Head of caudate nucleus (tissue), 42 donors: ENCODE measurements at regions of chr7 and their contacts with region 1.

Region 1: GRCh38 chr7:44082541-44083207 is 344 bp upstream of the POLM start:
- DNase-seq: peak; percentile 93 to 100 (median 99)

Region 2: DNA sequence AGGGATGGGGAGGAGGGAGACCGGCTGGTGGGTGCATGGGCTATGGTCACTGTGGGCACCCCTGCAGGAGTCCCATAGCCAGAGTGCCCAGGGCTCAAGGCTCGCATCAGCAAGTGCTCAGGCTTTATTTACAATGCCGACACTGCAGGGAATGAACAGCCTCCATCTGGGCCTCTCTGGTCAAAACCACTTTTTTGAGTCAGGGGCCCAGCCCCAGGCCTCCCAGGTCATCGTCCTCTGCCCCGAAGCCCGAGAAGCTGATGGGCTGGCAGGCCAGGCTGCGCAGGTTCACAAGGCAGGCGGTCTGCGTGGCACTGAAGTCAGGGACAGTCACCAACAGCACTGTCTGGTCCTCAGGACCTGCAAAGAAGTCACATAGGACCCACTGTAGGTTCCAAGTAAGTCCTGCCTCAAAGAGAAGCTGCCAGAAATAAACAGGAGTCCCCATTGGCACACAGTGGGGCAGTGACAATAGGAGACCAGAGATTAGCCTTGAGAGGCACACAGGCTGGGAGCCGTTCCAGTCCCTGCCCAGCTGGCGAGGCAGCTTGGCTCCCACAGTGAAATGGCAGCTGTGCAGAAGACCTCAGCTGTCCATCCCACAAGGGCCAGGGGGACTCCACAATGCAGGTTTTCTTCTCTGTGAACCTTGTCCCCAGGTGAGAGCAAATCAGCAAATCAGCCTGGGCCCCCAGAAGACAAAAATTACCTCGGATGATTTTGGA is 32.1 kb after region 1 on chr7:
- intact Hi-C with region 1: loop called (anchors 5 kb)
- DNase-seq: peak; percentile 67 to 93 (median 86)

Region 3: DNA sequence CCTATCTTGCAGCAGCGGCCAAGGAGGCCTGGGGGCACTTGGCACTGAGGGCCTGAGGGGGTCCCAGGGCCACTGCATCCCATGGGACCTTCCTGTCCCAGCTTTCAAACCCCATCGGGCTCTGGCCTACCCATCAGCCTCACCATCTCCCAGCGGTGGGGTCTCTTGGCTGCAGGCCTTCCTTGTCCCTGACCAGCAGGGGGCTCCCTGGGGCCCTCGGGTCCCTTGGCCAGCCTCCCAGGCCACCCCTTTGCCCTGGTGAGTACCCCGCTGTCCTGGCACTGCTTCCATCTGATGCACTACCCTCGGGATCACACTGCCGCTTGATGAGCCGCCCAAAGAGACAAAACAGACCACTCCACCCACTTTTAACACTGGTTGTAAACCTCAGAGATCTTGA is 161.6 kb after region 1 on chr7:
- intact Hi-C with region 1: no loop called
- DNase-seq: peak in 2 of 42 donors; percentile 23 to 48

Region 4: DNA sequence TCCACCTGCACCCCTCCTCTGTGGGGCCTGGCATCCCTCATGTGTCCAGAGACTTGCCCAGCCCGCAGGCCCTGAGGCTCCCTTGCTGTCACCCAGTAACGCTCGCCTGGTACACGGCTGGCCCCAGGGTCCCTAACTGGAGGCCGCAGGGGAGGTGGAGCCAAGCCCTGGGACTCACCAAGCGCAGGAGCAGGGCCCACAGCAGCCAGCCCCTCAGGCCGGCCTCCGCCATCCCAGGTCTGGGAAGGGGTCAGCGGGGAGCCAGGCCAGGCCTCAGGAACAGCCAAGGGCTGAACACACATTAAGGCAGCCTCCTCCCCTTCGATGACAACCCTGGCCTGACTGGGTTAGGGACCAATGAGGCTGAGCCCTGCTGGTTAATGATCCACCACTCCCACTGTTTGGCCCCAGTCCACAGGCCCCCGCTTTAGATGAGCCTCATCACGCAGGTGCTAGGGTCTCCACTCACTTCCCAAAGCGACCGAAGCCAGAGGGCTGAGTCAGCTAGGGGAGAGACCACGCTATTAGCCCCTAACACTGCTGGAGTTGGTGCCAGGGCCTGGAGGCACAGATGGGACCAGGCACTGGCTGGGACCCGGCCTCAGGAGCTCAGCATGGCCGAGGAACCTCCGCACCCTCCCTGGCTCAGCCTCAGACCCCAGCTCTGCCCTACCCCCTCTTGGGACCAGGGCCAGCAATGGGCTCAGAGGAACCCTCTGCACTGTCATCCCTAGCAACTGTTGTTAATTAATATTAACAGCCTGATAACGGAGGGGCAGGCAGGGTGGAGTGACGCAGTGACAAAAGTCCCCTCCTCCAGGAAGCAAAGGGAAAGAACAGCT is 458.6 kb after region 1 on chr7 and contains the start of gene NPC1L1:
- intact Hi-C with region 1: no loop called
- DNase-seq: no peak